CD4-positive, alpha-beta memory T cell (primary cell): ENCODE measurements at regions of chr11 and their contacts with region 1.

Region 1: DNA sequence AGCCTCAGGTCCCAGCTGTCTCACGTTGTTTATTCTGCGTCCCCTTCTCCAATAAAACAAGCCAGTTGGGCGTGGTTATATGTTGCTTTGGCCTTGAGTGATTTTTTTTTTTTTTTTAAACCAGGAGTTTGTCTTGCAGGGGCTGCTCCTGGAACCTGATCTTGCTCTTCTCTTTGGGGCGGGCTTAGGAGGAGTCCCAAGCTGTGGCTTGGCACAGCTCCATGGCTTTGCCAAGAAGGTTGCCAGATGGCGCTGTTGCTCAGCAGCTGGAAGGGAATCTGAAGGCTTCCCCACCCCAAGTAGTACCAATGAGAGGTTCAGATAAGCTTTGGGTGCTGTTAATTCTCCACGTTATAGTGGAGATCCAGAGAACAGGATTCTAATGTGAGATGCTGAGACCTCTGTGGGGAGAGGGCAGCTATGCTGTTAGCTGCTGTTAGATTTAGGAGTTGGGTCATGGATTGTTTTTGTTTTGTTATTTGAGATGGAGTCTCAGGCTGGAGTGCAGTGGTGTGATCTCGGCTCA is 2.0 kb upstream of the FERMT3 start:
- DNase-seq: peak; percentile 85 to 90 (median 86)
- H3K4me3 ChIP-seq: no peak overlapping the region
- H3K4me3 Mint-ChIP-seq: peak overlapping the region; percentile 62 to 89 (median 82)
- H3K27ac ChIP-seq: no peak overlapping the region
- H3K27ac Mint-ChIP-seq: peak overlapping the region; percentile 85 to 97 (median 94)
- H3K4me1 ChIP-seq: peaks cover 44% of the 10 kb centered on the region
- H3K4me1 Mint-ChIP-seq: peaks cover 16 to 64% (median 39%) of the 10 kb centered on the region in 4 donors
- H3K27me3 ChIP-seq: no peaks in the 10 kb centered on the region
- H3K27me3 Mint-ChIP-seq: no peaks in the 10 kb centered on the region

Region 2: DNA sequence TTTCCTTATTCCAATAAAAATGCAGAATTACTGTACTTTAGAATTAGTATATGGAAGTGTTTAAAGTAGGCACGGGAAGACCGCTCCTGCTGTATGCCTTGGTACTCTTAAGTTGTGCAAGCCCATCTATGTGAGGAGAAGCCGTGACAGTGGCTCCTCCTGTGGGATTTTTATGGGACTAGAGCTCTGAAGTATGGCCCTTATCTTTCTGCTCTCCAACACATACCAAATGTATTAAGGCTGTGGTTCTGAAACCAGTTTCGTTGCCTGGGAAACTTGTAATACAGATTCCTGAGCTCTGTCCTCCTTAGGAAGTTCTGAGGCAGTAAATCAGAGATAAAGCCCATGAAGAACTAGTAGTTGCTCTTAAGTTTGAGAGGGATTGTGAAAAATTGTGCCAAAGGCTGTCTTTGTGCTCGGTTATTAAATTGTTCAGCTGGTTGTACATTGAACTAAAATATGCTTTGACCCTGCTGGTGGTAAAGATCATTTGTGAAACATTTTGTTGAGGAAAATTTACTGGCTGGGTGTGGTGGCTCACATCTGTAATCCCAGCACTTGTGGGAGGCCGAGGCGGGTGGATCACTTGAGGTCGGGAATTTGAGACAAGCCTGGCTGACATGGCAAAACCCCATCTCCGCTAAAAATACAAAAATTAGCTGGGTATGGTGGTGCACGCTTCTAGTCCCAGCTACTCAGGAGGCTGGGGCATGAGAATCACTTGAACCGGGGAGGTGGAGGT is 493.9 kb before region 1 on chr11:
- CTCF ChIA-PET with region 1: no interaction called
- POLR2A ChIA-PET with region 1: no interaction called
- intact Hi-C with region 1: no loop called
- DNase-seq: no peak
- H3K4me3 ChIP-seq: no peak overlapping the region
- H3K4me3 Mint-ChIP-seq: no peak overlapping the region
- H3K27ac ChIP-seq: no peak overlapping the region
- H3K27ac Mint-ChIP-seq: peak overlapping the region in 3 of 7 donors; percentile 43 to 55 (median 52)
- H3K4me1 ChIP-seq: no peaks in the 10 kb centered on the region
- H3K4me1 Mint-ChIP-seq: peaks cover 3 to 7% (median 5%) of the 10 kb centered on the region in 4 donors
- H3K27me3 ChIP-seq: no peaks in the 10 kb centered on the region
- H3K27me3 Mint-ChIP-seq: no peaks in the 10 kb centered on the region

Region 3: GRCh38 chr11:64233913-64234834 is 29.6 kb after region 1 on chr11 and contains the start of gene VEGFB:
- CTCF ChIA-PET with region 1: interaction called, 207 read pairs
- POLR2A ChIA-PET with region 1: interaction called, 937 read pairs
- intact Hi-C with region 1: no loop called
- DNase-seq: peak; percentile 62 to 76 (median 66)
- H3K4me3 ChIP-seq: peak within 1 kb of the TSS; percentile 57 to 58
- H3K4me3 Mint-ChIP-seq: peak within 1 kb of the TSS; percentile 79 to 87 (median 82)
- H3K27ac ChIP-seq: peak within 1 kb of the TSS; percentile 71
- H3K27ac Mint-ChIP-seq: peak within 1 kb of the TSS; percentile 73 to 94 (median 91)
- H3K4me1 ChIP-seq: peaks cover 40% of the 10 kb centered on the region
- H3K4me1 Mint-ChIP-seq: peaks cover 14 to 51% (median 34%) of the 10 kb centered on the region in 4 donors
- H3K27me3 ChIP-seq: no peaks in the 10 kb centered on the region
- H3K27me3 Mint-ChIP-seq: no peaks in the 10 kb centered on the region
- total RNA-seq, gene VEGFB: 96.8 to 97.3 TPM

Region 4: DNA sequence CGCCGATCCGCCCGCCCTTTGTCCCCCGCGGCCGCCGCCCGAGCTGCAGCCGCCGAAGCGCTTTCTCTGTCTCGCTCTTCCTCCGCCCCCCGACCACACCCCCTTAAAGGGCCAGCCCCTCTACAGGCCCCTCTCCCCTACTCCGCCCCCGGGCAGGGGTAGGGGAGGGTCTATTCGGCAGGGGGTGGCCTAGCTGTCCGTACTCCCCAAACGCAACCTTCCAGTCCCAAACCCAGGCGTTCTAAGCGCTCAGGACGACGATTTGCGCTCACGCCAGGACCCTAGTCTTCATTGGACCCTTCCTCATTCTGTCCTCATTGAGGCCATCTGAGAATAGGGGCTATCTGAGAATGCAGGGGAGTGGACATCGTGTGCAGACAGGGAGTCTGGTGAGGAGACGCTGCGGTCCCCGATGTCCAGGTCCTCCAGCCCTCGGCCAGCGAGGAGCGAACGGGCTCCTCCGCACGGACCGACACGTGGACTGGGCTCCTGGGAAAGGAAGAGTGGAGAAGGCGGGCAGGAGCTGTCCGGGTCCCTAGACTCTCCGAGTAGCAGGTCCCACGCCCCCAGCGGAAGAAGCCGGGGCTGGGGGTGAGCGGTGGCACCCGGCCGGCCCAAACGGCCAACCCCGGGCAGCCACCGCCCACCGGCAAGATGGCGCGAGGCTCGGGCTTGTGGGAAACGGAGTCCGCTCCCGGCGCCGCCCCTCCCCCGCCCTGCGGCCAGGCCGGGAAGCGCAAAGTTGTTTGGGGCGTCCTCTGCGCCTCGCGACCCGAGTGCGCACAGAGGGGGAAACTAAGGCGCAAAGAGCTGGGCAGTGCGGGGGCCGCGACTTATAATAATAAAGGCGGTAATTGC is 42.6 kb after region 1 on chr11 and contains the start of gene PPP1R14B:
- CTCF ChIA-PET with region 1: interaction called, 90 read pairs
- POLR2A ChIA-PET with region 1: interaction called, 937 read pairs
- intact Hi-C with region 1: loop called (anchors 1 kb)
- DNase-seq: peak; percentile 72 to 82 (median 74)
- H3K4me3 ChIP-seq: peak within 1 kb of the TSS; percentile 95 to 98
- H3K4me3 Mint-ChIP-seq: peak within 1 kb of the TSS; percentile 83 to 92 (median 88)
- H3K27ac ChIP-seq: peak within 1 kb of the TSS; percentile 63
- H3K27ac Mint-ChIP-seq: peak within 1 kb of the TSS; percentile 77 to 94 (median 92)
- H3K4me1 ChIP-seq: peaks cover 55% of the 10 kb centered on the region
- H3K4me1 Mint-ChIP-seq: peaks cover 10 to 70% (median 32%) of the 10 kb centered on the region in 4 donors
- H3K27me3 ChIP-seq: no peaks in the 10 kb centered on the region
- H3K27me3 Mint-ChIP-seq: no peaks in the 10 kb centered on the region
- total RNA-seq, gene PPP1R14B: 32.2 to 38.4 TPM

Region 5: GRCh38 chr11:64284048-64284961 is 79.8 kb after region 1 on chr11 and contains the start of gene BAD:
- CTCF ChIA-PET with region 1: interaction called, 34 read pairs
- POLR2A ChIA-PET with region 1: interaction called, 52 read pairs
- intact Hi-C with region 1: no loop called
- DNase-seq: peak; percentile 89 to 94 (median 90)
- H3K4me3 ChIP-seq: peak within 1 kb of the TSS; percentile 93 to 96
- H3K4me3 Mint-ChIP-seq: peak within 1 kb of the TSS; percentile 90 to 93 (median 92)
- H3K27ac ChIP-seq: peak within 1 kb of the TSS; percentile 100
- H3K27ac Mint-ChIP-seq: peak within 1 kb of the TSS; percentile 96 to 99 (median 98)
- H3K4me1 ChIP-seq: peaks cover 24% of the 10 kb centered on the region
- H3K4me1 Mint-ChIP-seq: peaks cover 12 to 48% (median 23%) of the 10 kb centered on the region in 4 donors
- H3K27me3 ChIP-seq: no peaks in the 10 kb centered on the region
- H3K27me3 Mint-ChIP-seq: no peaks in the 10 kb centered on the region
- total RNA-seq, gene BAD: 23.1 to 26.2 TPM

Region 6: DNA sequence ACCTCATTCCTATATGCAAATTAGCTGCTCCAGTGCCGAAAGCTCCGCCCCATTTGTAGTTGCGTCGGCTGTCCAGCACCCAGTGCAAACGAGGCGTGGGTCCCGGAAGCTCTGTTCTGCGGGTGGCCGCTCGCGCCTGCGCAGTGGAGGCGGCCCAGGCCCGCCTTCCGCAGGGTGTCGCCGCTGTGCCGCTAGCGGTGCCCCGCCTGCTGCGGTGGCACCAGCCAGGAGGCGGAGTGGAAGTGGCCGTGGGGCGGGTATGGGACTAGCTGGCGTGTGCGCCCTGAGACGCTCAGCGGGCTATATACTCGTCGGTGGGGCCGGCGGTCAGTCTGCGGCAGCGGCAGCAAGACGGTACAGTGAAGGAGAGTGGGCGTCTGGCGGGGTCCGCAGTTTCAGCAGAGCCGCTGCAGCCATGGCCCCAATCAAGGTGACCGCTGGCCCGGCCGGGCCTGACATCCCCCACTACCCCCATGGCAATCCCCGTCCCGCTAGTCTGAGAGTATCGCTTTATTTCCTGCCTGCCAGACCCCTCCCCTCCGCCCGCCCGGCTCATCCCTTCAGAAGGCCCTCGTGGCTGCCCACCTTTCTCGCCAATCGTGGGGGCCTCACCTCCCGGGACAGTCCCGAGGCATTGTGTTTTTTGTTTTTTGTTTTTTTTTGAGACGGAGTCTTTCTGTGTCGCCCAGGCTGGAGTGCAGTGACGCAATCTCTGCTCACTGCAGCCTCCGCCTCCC is 113.6 kb after region 1 on chr11 and contains the start of gene PRDX5:
- CTCF ChIA-PET with region 1: interaction called, 12 read pairs
- POLR2A ChIA-PET with region 1: interaction called, 70 read pairs
- intact Hi-C with region 1: no loop called
- DNase-seq: peak; percentile 96 to 98 (median 97)
- H3K4me3 ChIP-seq: peak within 1 kb of the TSS; percentile 68 to 72
- H3K4me3 Mint-ChIP-seq: peak within 1 kb of the TSS; percentile 95 to 99 (median 96)
- H3K27ac ChIP-seq: peak within 1 kb of the TSS; percentile 96
- H3K27ac Mint-ChIP-seq: peak within 1 kb of the TSS; percentile 97 to 100 (median 100)
- H3K4me1 ChIP-seq: peaks cover 26% of the 10 kb centered on the region
- H3K4me1 Mint-ChIP-seq: peaks cover 17 to 44% (median 29%) of the 10 kb centered on the region in 4 donors
- H3K27me3 ChIP-seq: no peaks in the 10 kb centered on the region
- H3K27me3 Mint-ChIP-seq: no peaks in the 10 kb centered on the region
- total RNA-seq, gene PRDX5: 57.6 to 58.7 TPM

Region 7: DNA sequence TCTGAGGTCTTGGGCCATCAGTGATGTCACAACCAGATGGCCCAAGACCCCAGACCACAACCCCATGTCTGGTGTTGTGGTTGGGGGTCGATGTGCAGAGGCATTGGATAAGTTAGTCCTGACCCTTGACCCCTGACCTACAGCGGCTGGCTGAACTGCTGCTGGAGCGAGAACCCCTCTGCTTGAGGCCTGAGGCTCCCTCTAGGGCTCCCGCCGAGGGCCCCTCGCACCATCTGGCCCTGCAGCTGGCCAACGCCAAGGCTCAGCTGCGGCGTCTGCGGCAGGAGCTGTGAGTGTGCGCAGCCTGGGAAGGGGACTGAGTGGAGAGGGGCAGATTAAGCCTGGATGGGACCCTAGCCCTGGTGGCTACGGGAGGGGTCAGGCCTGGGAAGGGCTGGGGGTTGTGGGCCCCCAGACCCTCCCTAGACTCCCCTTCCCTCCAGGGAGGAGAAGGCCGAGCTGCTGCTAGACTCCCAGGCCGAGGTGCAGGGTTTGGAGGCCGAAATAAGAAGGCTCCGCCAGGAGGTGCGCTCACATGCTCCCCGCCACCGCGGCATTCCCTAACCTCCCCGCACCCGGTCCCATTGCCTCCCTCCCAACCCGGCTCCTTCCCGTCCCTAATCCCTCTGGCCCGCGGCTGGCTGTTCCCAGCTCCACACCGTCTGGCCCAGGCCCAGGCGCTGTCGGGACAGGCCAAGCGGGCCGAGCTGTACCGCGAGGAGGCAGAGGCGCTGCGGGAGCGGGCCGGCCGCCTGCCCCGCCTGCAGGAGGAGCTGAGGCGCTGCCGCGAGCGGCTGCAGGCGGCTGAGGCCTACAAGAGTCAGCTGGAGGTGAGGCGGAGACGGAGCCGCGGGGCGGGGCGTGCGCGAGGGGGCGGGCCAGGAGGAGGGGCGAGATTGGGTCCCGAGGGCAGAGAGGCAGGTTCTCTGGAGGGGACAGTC is 137.6 kb after region 1 on chr11:
- CTCF ChIA-PET with region 1: interaction called, 5 read pairs
- POLR2A ChIA-PET with region 1: interaction called, 13 read pairs
- intact Hi-C with region 1: no loop called
- DNase-seq: peak; percentile 87 to 91 (median 89)
- H3K4me3 ChIP-seq: no peak overlapping the region
- H3K4me3 Mint-ChIP-seq: peak overlapping the region in 7 of 8 donors; percentile 39 to 93 (median 63)
- H3K27ac ChIP-seq: peak overlapping the region; percentile 42
- H3K27ac Mint-ChIP-seq: peak overlapping the region in 6 of 7 donors; percentile 48 to 88 (median 76)
- H3K4me1 ChIP-seq: peaks cover 44% of the 10 kb centered on the region
- H3K4me1 Mint-ChIP-seq: peaks cover 21 to 51% (median 36%) of the 10 kb centered on the region in 4 donors
- H3K27me3 ChIP-seq: no peaks in the 10 kb centered on the region
- H3K27me3 Mint-ChIP-seq: no peaks in the 10 kb centered on the region